ENCODE measurements at regions of chr7 and their contacts with region 1.

Region 1: DNA sequence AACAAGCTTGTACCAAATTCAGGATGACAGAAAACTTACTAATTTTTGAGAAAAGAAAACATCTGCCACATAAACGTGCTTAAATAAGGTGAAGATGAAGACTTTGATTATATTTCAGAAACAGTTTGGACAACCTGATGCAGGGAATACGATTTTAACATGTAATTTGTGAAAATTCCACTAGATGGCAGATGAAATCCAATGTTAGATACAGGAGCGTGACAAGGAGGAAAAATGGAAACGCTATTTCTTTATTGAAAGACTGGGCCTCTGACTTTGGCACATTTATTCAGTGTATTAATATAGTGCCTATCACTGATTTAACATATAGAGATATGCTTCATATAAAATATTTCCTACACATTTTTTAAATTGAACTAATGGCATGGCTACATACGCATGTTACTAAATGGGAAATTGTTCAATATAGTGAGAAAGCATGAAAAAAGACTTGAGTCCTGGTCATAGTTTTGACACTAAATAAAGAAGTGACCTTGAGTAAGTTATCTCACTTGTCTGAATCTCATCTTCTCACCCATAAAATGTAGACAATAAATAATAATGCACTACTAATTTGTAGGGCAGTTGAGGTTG is 60.7 kb downstream of the CD36 start:
- DNase-seq: peak in 2 of 4 donors; percentile 47 to 61
- ATAC-seq: peak; percentile 91
- H3K4me3 ChIP-seq: no peak overlapping the region
- H3K27ac ChIP-seq: peak overlapping the region in 1 of 2 donors; percentile 25
- H3K4me1 ChIP-seq: peaks cover 7 to 14% of the 10 kb centered on the region in 2 donors
- H3K27me3 ChIP-seq: peaks cover 0 to 6% of the 10 kb centered on the region in 2 donors
- CTCF ChIP-seq: peak; percentile 55 to 66

Region 2: DNA sequence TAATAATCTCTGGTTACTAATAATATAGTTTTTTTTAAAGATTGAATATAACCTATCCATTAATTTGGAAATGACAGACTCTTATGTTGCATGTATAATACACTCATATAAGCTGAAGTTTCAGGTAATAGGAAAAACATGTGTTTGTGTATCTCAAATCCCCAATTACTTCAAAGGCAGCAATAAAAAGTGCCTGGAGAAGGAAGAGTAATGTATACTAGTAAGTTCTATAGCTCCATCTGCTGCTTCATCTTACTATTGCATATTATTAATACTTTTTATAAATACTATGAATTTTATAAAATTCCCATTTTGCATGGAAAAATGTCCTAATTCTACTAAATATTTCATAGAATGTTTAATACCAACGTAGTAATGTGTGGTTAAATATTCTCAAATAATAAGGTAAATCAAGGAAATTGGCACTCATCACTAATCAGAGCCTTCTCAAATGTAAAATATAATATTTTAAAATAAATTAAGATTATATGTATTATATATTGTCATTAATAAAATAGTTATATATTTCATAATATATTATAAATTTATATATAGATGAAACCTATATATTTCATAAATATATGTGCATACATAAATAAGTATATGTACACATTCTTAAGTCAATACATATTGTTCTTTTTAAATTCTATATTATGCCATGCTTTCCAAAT is 758.8 kb after region 1 on chr7:
- intact Hi-C with region 1: loop called (anchors 5 to 10 kb)
- DNase-seq: peak in 1 of 4 donors; percentile 24
- ATAC-seq: no peak
- H3K4me3 ChIP-seq: no peak overlapping the region
- H3K27ac ChIP-seq: no peak overlapping the region
- H3K4me1 ChIP-seq: no peaks in the 10 kb centered on the region
- H3K27me3 ChIP-seq: no peaks in the 10 kb centered on the region
- CTCF ChIP-seq: peak in 1 of 2 donors; percentile 32

Region 3: GRCh38 chr7:81469869-81470723 is 771.0 kb after region 1 on chr7:
- intact Hi-C with region 1: loop called in 1 of 2 experiments (anchors 10 kb)
- DNase-seq: peak in 3 of 4 donors; percentile 65 to 75 (median 70)
- ATAC-seq: peak; percentile 92
- H3K4me3 ChIP-seq: no peak overlapping the region
- H3K27ac ChIP-seq: no peak overlapping the region
- H3K4me1 ChIP-seq: no peaks in the 10 kb centered on the region
- H3K27me3 ChIP-seq: no peaks in the 10 kb centered on the region
- CTCF ChIP-seq: peak; percentile 50 to 55

Measured in left lung (tissue), 14 donors.